RWPE1 (cell line): ENCODE measurements at regions of chr16 and their contacts with region 1.

Region 1: GRCh38 chr16:74903881-74904678 is 80.8 kb downstream of the WDR59 start:
- DNase-seq: no peak
- H3K27ac ChIP-seq: no peak overlapping the region
- CTCF ChIP-seq: no peak

Region 2: GRCh38 chr16:74666425-74667254 is 237.4 kb before region 1 on chr16 and contains the start of gene RFWD3:
- CTCF ChIA-PET with region 1: no interaction called
- POLR2A ChIA-PET with region 1: interaction called, 11 read pairs
- DNase-seq: peak; percentile 100
- H3K27ac ChIP-seq: peak within 1 kb of the TSS; percentile 85
- CTCF ChIP-seq: no peak

Region 3: GRCh38 chr16:74729783-74730699 is 174.0 kb before region 1 on chr16:
- CTCF ChIA-PET with region 1: no interaction called
- POLR2A ChIA-PET with region 1: no interaction called
- DNase-seq: peak; percentile 46
- H3K27ac ChIP-seq: peak overlapping the region; percentile 95
- CTCF ChIP-seq: no peak